ENCODE measurements at regions of chr11 and their contacts with region 1.

Region 1: DNA sequence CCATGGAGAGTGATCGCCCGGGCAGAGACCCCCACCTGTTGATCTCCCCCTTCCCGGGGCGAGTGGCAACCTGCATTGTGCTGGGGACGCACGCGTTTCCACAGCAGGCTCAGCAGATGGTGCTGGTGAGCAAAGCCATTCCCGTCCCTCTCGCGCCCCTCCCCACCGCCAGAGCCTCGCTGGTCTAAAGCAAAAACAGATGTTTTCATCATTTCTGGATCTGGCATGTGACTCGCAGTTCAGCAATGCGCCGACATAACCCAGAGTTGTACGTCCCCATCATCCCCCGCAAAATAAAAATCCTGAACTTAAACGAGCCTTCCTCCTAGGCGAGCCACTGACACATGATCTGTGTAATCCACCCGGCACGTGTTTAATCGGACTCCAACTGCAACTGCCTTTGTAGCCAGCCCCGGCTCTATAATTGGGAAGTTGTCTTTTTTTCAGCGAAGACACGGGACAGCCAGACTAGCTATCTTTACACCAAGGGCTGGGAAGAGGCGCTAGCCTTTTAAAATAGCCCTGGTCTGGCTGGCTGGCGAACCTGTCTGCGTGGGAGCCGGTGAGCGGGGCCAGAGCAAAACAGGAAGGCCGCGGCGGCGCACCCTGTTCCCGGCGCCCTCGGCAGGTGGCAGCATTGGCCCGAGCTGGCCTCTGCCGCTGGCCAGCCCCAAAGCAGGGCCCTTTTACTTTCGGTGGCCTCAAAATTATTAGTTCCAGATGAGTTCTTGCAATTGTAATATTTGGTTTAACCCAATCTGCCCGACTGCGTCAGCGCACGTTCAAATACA is 203.0 kb upstream of the SORL1-AS1 start:
- DNase-seq: peak; percentile 81
- H3K4me3 Mint-ChIP-seq: peak overlapping the region; percentile 70
- H3K27ac Mint-ChIP-seq: peak overlapping the region; percentile 8
- H3K4me1 Mint-ChIP-seq: peaks cover 21% of the 10 kb centered on the region
- H3K27me3 Mint-ChIP-seq: no peaks in the 10 kb centered on the region

Region 2: DNA sequence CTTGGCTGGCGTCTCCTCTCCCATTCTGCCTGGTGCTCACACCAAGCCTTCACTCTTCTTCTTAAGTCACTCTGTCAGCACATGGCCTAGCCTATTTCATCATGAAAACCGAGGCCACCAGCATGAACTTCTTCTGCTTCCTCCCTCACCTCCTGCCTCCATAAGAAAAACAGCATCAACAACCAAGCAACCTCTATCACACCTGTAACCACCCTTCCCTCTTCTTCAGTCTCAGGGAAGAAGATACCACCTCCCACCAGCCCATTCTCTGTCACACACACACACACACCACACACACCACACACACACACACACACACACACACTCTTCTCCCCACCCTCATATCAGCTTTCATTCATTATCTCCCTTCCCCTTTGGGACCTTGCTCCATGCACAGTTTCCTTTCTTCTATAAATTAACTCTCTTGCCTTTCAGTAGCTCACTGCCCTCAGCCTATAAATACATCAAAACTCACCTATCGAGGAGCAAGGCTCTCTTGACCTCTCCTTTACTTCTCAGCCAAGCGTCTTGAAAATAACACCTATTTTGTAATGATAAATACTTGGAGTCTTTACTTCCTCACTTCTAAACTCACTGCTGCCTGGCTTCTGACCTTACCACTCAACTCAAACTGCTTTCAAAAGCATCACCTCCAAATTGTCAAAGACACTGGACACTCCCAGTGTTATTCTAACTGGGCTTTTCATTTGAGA is 326.6 kb before region 1 on chr11:
- CTCF ChIA-PET with region 1: no interaction called
- POLR2A ChIA-PET with region 1: no interaction called
- intact Hi-C with region 1: loop called (anchors 5 kb)
- DNase-seq: peak; percentile 33
- H3K4me3 Mint-ChIP-seq: no peak overlapping the region
- H3K27ac Mint-ChIP-seq: no peak overlapping the region
- H3K4me1 Mint-ChIP-seq: peaks cover 8% of the 10 kb centered on the region
- H3K27me3 Mint-ChIP-seq: no peaks in the 10 kb centered on the region

Region 3: GRCh38 chr11:121341609-121342008 is 314.1 kb before region 1 on chr11:
- CTCF ChIA-PET with region 1: no interaction called
- POLR2A ChIA-PET with region 1: no interaction called
- intact Hi-C with region 1: no loop called
- DNase-seq: peak; percentile 61
- H3K4me3 Mint-ChIP-seq: no peak overlapping the region
- H3K27ac Mint-ChIP-seq: no peak overlapping the region
- H3K4me1 Mint-ChIP-seq: peaks cover 23% of the 10 kb centered on the region
- H3K27me3 Mint-ChIP-seq: no peaks in the 10 kb centered on the region

Region 4: GRCh38 chr11:121767433-121767832 is 111.7 kb after region 1 on chr11:
- CTCF ChIA-PET with region 1: no interaction called
- POLR2A ChIA-PET with region 1: no interaction called
- intact Hi-C with region 1: loop called (anchors 5 kb)
- DNase-seq: no peak
- H3K4me3 Mint-ChIP-seq: no peak overlapping the region
- H3K27ac Mint-ChIP-seq: no peak overlapping the region
- H3K4me1 Mint-ChIP-seq: no peaks in the 10 kb centered on the region
- H3K27me3 Mint-ChIP-seq: no peaks in the 10 kb centered on the region

Region 5: GRCh38 chr11:122108192-122108799 is 452.6 kb after region 1 on chr11:
- CTCF ChIA-PET with region 1: no interaction called
- POLR2A ChIA-PET with region 1: no interaction called
- intact Hi-C with region 1: loop called (anchors 10 kb)
- DNase-seq: peak; percentile 11
- H3K4me3 Mint-ChIP-seq: no peak overlapping the region
- H3K27ac Mint-ChIP-seq: no peak overlapping the region
- H3K4me1 Mint-ChIP-seq: no peaks in the 10 kb centered on the region
- H3K27me3 Mint-ChIP-seq: peaks cover 11% of the 10 kb centered on the region

Region 6: DNA sequence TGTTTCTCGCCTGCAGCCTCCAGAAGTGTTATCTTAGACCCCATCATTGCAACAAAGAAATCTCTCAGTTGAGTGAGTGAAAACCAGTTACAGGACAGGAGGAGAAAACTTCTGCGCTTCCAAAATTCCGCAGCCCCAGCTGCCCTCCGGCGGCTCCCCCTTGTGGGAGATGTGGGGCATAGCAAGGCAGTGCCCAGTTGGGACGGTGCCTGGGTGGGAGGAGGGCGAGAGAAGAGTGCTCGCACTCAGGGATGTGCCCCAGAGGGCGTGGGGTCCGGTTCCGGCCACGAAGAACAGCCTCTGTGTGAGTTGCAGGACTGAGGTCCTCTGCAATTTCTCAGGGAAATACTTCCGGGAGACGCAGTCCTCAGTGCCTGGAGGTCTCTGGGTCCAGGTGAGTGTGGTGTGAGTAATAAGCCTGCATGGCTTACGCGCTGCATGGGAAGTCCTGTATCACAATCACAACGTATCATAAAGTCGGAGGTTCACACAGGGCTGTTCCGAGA is 547.3 kb after region 1 on chr11:
- CTCF ChIA-PET with region 1: interaction called, 32 read pairs
- POLR2A ChIA-PET with region 1: no interaction called
- intact Hi-C with region 1: loop called (anchors 1 kb)
- DNase-seq: peak; percentile 59
- H3K4me3 Mint-ChIP-seq: no peak overlapping the region
- H3K27ac Mint-ChIP-seq: no peak overlapping the region
- H3K4me1 Mint-ChIP-seq: no peaks in the 10 kb centered on the region
- H3K27me3 Mint-ChIP-seq: peaks cover 22% of the 10 kb centered on the region

Region 7: DNA sequence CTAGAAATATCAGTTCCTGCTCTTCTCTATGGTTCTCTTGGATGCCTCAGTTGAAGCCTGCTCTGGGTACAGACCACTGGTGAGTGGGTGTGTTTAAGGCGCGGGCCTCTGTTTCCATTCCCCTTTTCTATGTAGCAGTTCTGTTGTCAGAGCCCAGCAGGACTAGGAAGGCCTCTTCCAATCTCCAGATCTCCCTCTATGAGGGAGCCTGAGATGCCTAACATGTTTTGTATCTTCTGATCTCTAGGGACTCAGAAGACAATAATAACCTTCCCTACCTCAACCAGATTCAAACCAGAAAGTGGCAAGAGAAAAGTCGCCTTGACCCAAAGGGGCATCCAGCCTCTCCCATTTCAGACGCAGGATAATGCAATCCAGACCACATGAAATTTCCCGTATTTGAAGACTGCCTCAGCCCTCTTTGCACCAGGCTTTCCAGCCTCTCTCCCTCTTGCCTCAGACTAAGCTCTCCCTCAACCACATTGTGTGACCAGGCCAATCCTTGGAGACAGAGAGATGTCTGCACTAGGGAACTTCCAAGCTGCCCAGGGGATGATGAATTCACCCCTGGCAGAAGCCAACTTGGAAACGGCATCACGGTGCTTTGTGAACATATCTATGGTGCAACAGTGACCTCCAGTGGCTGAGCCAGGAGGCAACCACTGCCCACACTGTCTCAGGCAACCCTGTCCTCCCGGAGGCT is 849.7 kb after region 1 on chr11:
- CTCF ChIA-PET with region 1: interaction called, 10 read pairs
- POLR2A ChIA-PET with region 1: no interaction called
- intact Hi-C with region 1: loop called (anchors 1 kb)
- DNase-seq: peak; percentile 68
- H3K4me3 Mint-ChIP-seq: no peak overlapping the region
- H3K27ac Mint-ChIP-seq: no peak overlapping the region
- H3K4me1 Mint-ChIP-seq: no peaks in the 10 kb centered on the region
- H3K27me3 Mint-ChIP-seq: peaks cover 25% of the 10 kb centered on the region

Region 8: DNA sequence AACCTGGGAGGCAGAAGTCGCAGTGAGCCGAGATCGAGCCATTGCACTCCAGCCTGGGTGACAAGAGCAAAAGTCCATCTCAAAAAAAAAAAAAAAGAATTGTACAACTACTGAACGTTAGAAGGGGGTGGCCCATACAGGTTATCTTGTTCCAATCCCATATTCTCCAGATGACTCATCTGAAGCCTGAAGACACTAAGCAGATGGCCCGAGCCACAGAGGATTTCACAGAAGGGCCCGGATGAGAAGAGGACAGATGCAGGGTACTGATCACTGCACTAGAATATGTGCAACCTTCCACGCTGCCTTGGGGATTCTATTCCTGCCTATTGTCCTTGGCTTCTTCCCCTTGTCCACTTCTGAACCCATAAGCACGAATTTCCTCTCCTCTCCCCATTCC is 928.9 kb after region 1 on chr11:
- CTCF ChIA-PET with region 1: interaction called, 7 read pairs
- POLR2A ChIA-PET with region 1: no interaction called
- intact Hi-C with region 1: loop called (anchors 5 kb)
- DNase-seq: no peak
- H3K4me3 Mint-ChIP-seq: no peak overlapping the region
- H3K27ac Mint-ChIP-seq: no peak overlapping the region
- H3K4me1 Mint-ChIP-seq: peaks cover 8% of the 10 kb centered on the region
- H3K27me3 Mint-ChIP-seq: peaks cover 7% of the 10 kb centered on the region